Lower leg skin (tissue), 4 donors: ENCODE measurements at regions of chr3 and their contacts with region 1.

Region 1: GRCh38 chr3:61807865-61808276 is 246.5 kb downstream of the PTPRG start:
- DNase-seq: no peak
- H3K4me3 ChIP-seq: no peak overlapping the region
- CTCF ChIP-seq: no peak
- POLR2A ChIP-seq: no peak

Region 2: DNA sequence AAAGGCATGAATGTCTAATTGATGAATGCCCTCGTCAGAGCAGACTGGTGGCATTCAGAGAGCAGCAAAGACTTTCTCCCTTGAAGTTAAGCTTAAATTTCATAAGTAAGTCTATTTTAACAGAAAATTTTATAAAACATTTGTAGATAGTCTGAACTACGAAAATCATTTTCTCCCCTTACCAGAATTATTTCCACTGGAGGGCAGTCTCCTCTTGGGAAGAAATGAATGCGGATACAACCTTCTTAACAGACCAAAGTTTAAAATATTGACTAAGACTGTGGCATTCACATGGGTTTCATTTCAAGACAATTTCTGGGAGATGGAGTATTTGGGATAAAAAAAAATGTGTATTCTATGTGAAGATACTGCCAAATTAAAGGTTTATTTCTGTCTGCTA is 1225.6 kb before region 1 on chr3:
- intact Hi-C with region 1: loop called (anchors 10 kb)
- DNase-seq: no peak
- H3K4me3 ChIP-seq: no peak overlapping the region
- CTCF ChIP-seq: no peak
- POLR2A ChIP-seq: no peak

Region 3: GRCh38 chr3:61561374-61562041 is 246.4 kb before region 1 on chr3 and contains the start of gene PTPRG:
- intact Hi-C with region 1: no loop called
- DNase-seq: peak; percentile 88 to 97
- H3K4me3 ChIP-seq: peak within 1 kb of the TSS; percentile 82
- CTCF ChIP-seq: no peak
- POLR2A ChIP-seq: no peak
- total RNA-seq, gene PTPRG: 8.4 to 37.3 (median 14.9) TPM